ENCODE measurements at regions of chr9 and their contacts with region 1.

Region 1: DNA sequence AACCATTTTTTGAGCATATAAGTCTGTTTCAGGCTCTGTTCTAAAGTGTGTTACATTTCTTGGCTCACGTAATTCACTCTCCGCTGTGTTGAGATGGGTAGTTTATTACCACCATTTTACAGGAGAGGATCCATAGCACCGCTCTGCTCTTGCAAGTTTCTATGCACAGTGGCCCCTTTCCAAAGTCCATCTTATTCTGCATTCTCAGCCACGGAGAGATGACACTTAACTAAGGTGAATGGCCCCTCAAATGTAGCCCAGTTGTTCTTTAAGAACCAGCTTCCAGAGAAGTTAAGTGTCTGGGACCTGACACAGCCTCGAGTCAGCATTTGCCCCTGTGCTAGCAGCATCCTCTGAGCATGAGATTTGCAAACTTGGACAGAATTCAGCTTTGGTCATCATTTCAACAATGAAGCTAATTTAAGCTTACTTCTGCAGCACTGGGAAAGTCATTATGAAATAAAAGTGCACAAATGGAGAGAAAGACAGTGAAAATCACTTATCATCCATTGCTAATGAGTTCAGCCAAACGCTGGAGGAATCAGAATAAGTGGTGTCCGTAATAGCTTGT is 61.9 kb downstream of the FAM78A start:
- DNase-seq: no peak
- H3K4me3 ChIP-seq: no peak overlapping the region
- H3K27ac ChIP-seq: peak overlapping the region in 1 of 2 donors; percentile 6
- H3K4me1 ChIP-seq: peaks cover 6% of the 10 kb centered on the region
- H3K27me3 ChIP-seq: no peaks in the 10 kb centered on the region
- CTCF ChIP-seq: no peak
- EP300 ChIP-seq: no peak
- POLR2A ChIP-seq: no peak

Region 2: GRCh38 chr9:131347376-131348020 is 133.1 kb after region 1 on chr9:
- intact Hi-C with region 1: no loop called
- DNase-seq: no peak
- H3K4me3 ChIP-seq: no peak overlapping the region
- H3K27ac ChIP-seq: no peak overlapping the region
- H3K4me1 ChIP-seq: no peaks in the 10 kb centered on the region
- H3K27me3 ChIP-seq: no peaks in the 10 kb centered on the region
- CTCF ChIP-seq: no peak
- EP300 ChIP-seq: no peak
- POLR2A ChIP-seq: no peak

Region 3: DNA sequence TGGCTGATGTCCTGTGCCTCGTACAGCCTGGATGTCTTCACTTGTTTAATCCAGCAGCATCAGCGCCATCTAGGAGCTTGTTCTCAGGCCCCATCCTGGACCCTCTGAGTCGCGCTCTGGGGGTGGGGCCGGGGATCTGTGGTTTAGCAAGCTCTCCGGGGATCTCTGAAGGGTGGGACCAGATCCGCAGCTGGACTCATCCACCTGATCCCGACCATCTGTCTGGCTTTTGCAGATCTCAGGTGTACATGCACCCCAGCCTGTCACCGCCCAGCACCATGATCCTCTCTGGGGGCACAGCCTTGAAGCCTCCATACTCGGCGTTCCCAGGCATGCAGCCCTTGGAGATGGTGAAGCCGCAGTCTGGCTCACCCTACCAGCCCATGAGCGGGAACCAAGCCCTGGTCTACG is 273.3 kb after region 1 on chr9:
- intact Hi-C with region 1: no loop called
- DNase-seq: no peak
- H3K4me3 ChIP-seq: no peak overlapping the region
- H3K27ac ChIP-seq: no peak overlapping the region
- H3K4me1 ChIP-seq: no peaks in the 10 kb centered on the region
- H3K27me3 ChIP-seq: no peaks in the 10 kb centered on the region
- CTCF ChIP-seq: no peak
- EP300 ChIP-seq: no peak
- POLR2A ChIP-seq: no peak

Region 4: GRCh38 chr9:132837501-132838286 is 1623.3 kb after region 1 on chr9:
- intact Hi-C with region 1: loop called in 1 of 4 experiments (anchors 5 kb)
- DNase-seq: peak in 1 of 5 donors; percentile 14
- H3K4me3 ChIP-seq: no peak overlapping the region
- H3K27ac ChIP-seq: no peak overlapping the region
- H3K4me1 ChIP-seq: no peaks in the 10 kb centered on the region
- H3K27me3 ChIP-seq: no peaks in the 10 kb centered on the region
- CTCF ChIP-seq: no peak
- EP300 ChIP-seq: no peak
- POLR2A ChIP-seq: no peak

Measured in ovary (tissue), 10 donors.